ENCODE measurements at regions of chr16 and their contacts with region 1.

Region 1: DNA sequence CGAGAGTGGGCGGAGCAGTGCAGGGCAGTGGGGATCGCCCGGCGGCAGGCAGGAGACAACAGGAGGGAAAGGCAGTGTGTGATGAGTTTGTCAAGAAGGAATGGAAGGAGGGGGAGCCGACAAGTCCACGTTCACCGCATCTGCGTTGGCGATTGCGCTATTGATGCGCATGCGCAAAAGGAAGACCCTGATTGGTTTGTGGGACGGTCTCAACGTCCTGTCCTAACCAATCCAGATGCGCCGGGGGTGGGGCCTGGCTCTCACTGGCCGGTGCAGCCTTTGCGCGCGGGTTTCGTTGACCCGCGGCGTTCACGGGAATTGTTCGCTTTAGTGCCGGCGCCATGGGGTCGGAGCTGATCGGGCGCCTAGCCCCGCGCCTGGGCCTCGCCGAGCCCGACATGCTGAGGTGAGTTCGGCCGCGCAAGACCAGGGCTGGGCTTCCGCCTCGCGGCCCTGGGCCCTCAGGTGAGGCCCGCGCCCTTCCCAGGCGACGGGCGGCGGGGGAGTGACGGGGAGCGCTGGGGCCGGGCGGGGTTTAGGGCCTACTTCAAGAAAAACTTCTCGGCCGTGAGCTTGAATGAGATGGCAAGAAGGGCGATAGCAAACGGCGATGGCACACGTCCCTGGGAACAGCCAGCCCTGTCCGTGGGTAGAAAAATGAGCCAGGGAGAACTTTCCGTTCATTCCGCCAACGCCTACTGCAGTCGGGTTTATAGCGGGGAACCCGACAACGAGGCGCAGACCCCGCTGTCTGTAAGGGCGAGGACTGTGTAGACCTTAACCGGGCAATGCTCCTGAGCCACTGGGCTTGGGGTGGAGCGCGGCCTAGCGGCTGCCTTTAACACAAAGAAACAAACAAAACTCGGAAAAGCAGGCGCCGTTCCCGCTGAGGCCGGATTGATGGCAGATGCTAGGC is at the start of gene ORC6:
- DNase-seq: peak; percentile 93 to 98 (median 96)
- ATAC-seq: peak; percentile 73
- H3K4me3 ChIP-seq: peak within 1 kb of the TSS; percentile 90 to 98
- H3K4me3 Mint-ChIP-seq: no peak within 1 kb of the TSS
- H3K27ac ChIP-seq: peak within 1 kb of the TSS; percentile 95
- H3K27ac Mint-ChIP-seq: no peak within 1 kb of the TSS
- H3K4me1 ChIP-seq: peaks cover 28% of the 10 kb centered on the region
- H3K4me1 Mint-ChIP-seq: peaks cover 31% of the 10 kb centered on the region
- H3K27me3 ChIP-seq: no peaks in the 10 kb centered on the region
- H3K27me3 Mint-ChIP-seq: no peaks in the 10 kb centered on the region
- CTCF ChIP-seq: peak; percentile 45
- total RNA-seq, gene ORC6: 4.7 to 5.7 TPM

Region 2: GRCh38 chr16:46673320-46674013 is 16.2 kb before region 1 on chr16:
- CTCF ChIA-PET with region 1: interaction called, 7 read pairs
- POLR2A ChIA-PET with region 1: no interaction called
- intact Hi-C with region 1: loop called (anchors 1 kb)
- DNase-seq: peak in 8 of 9 experiments; percentile 17 to 76 (median 48)
- ATAC-seq: peak; percentile 95
- H3K4me3 ChIP-seq: no peak overlapping the region
- H3K4me3 Mint-ChIP-seq: no peak overlapping the region
- H3K27ac ChIP-seq: no peak overlapping the region
- H3K27ac Mint-ChIP-seq: no peak overlapping the region
- H3K4me1 ChIP-seq: no peaks in the 10 kb centered on the region
- H3K4me1 Mint-ChIP-seq: peaks cover 2% of the 10 kb centered on the region
- H3K27me3 ChIP-seq: no peaks in the 10 kb centered on the region
- H3K27me3 Mint-ChIP-seq: no peaks in the 10 kb centered on the region
- CTCF ChIP-seq: peak; percentile 95

Region 3: DNA sequence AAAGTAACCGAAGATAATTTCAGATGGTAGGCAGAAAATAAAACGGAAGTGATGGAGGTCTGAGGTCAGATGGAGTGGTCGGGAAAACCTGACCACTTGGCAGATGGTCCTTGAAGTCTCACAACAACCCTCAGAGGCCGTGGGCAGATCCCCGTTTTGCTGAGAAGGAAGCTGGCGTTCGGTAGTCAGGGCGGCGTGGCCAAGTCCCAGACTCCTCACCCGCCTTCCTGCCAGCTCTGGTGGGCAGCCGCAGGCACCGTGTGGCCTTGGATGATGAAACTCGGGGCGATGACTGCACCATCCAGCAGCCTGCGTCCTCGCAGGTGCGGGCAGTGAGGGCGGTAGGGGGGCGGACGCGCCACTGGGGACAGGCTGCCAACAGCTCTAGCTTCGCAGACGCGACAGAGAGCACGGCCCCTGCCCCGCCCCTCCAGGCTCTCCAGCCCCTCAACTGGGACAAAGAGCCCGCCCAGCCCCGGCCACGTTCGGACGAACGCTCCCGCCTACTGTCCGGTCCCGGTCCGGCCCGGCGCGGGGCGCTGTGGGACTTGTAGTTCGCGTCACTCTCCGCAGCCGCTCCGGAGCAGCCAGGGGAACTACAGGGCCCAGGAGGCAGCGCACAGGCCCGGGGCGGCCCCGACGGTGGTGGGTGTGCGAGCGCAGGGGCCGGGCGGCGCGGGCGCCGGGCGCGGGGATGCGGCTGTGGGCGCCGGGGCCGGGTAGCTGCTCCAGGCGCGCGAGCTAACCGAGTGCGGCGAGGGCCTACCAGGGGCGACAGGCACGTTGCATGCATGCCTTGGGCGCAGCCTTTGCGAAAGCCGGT is 194.3 kb after region 1 on chr16 and contains the start of gene GPT2:
- CTCF ChIA-PET with region 1: no interaction called
- POLR2A ChIA-PET with region 1: no interaction called
- intact Hi-C with region 1: loop called in 1 of 2 experiments (anchors 1 kb)
- DNase-seq: peak; percentile 27 to 77 (median 59)
- ATAC-seq: peak; percentile 91
- H3K4me3 ChIP-seq: peak within 1 kb of the TSS; percentile 59 to 70
- H3K4me3 Mint-ChIP-seq: peak within 1 kb of the TSS; percentile 92
- H3K27ac ChIP-seq: no peak within 1 kb of the TSS
- H3K27ac Mint-ChIP-seq: no peak within 1 kb of the TSS
- H3K4me1 ChIP-seq: no peaks in the 10 kb centered on the region
- H3K4me1 Mint-ChIP-seq: peaks cover 10% of the 10 kb centered on the region
- H3K27me3 ChIP-seq: no peaks in the 10 kb centered on the region
- H3K27me3 Mint-ChIP-seq: peaks cover 29% of the 10 kb centered on the region
- CTCF ChIP-seq: no peak
- total RNA-seq, gene GPT2: 0.08 TPM in 1 of 2 experiments, not detected in the other

Region 4: GRCh38 chr16:47136101-47136820 is 446.6 kb after region 1 on chr16:
- CTCF ChIA-PET with region 1: no interaction called
- POLR2A ChIA-PET with region 1: no interaction called
- intact Hi-C with region 1: loop called (anchors 10 kb)
- DNase-seq: peak in 2 of 9 experiments; percentile 17 to 31
- ATAC-seq: peak; percentile 55
- H3K4me3 ChIP-seq: no peak overlapping the region
- H3K4me3 Mint-ChIP-seq: no peak overlapping the region
- H3K27ac ChIP-seq: no peak overlapping the region
- H3K27ac Mint-ChIP-seq: no peak overlapping the region
- H3K4me1 ChIP-seq: no peaks in the 10 kb centered on the region
- H3K4me1 Mint-ChIP-seq: no peaks in the 10 kb centered on the region
- H3K27me3 ChIP-seq: no peaks in the 10 kb centered on the region
- H3K27me3 Mint-ChIP-seq: peaks cover 7% of the 10 kb centered on the region
- CTCF ChIP-seq: no peak

Region 5: DNA sequence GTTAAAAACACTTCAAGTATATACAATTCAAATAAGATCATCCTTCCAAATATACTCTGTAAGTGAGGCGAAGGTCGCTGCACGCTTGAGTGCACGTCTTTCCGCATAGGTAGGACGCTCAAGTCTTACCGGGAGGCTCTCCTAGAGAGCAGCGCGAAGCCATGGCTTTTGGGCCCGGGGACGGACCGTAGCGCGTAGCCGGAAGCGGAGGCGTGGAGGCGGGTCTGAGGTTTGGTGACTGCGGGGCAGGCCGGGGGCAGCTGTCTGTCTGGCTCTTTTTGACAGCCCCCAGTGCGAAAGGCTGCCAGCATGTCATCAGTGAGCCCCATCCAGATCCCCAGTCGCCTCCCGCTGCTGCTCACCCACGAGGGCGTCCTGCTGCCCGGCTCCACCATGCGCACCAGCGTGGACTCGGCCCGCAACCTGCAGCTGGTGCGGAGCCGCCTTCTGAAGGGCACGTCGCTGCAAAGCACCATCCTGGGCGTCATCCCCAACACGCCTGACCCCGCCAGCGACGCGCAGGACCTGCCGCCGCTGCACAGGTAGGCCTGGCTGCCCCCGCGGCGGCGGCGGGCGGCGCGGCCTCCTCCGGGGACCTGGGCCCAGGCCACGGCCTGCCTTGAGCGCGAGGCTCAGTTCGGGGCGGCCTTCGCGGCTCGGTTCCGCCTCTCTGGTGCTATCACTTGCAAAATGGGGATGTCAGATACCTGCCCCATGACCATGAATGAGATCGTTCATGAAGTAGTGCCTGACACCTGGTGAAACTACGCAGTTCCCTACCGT is 1554.6 kb after region 1 on chr16 and contains the start of gene LONP2:
- CTCF ChIA-PET with region 1: no interaction called
- POLR2A ChIA-PET with region 1: no interaction called
- intact Hi-C with region 1: loop called in 1 of 2 experiments (anchors 2 kb)
- DNase-seq: peak; percentile 82 to 93 (median 89)
- ATAC-seq: peak; percentile 94
- H3K4me3 ChIP-seq: peak within 1 kb of the TSS; percentile 66 to 88
- H3K4me3 Mint-ChIP-seq: peak within 1 kb of the TSS; percentile 90
- H3K27ac ChIP-seq: peak within 1 kb of the TSS; percentile 75 to 83
- H3K27ac Mint-ChIP-seq: peak within 1 kb of the TSS; percentile 95
- H3K4me1 ChIP-seq: peaks cover 38% of the 10 kb centered on the region
- H3K4me1 Mint-ChIP-seq: peaks cover 50% of the 10 kb centered on the region
- H3K27me3 ChIP-seq: no peaks in the 10 kb centered on the region
- H3K27me3 Mint-ChIP-seq: no peaks in the 10 kb centered on the region
- CTCF ChIP-seq: no peak
- total RNA-seq, gene LONP2: 71.8 to 72.1 TPM